ENCODE measurements at regions of chr1 and their contacts with region 1.

Region 1: DNA sequence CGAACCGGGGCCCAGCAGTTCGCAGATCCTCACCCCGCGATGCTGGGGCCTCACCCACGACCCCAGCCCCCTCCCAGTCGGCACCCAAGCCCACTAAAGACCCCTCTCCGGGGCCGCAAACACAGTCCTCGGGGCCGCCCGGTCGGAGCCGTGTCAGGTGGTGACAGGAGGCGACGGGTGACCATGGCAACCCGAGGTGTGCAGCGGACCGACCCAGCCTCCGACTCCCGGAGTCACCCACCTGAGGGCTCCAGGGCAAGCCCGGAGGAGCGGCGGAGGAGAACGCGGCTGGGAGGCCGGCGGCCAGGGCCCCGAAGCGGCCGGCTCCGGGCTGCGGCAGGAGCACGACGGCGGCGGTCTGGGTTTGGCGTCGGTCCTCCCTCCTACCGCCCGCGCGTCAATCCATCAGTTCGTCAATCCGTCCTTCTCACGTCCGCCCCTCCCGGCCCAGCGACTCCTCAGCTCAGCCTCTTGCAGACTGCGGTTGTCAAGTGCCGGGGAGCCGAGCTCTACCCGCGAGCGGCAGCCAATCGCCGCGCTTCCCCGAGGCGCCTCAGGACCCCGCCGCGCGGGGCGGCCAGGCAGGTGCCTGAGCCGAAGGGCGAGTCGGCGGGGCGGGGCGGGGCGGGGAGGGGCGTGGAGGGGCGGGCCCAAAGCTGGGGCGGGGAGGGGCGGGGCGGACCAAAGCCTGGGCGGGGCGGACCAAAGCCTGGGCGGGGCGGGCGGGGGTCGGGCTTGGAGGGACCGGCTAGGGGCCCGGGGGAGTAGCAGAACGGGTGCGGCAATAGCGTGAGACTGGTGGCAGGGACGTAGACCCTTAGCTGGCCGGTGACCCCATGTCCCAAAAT is at the start of gene WDR47:
- DNase-seq: peak; percentile 93 to 99
- H3K4me3 ChIP-seq: peak within 1 kb of the TSS; percentile 100
- CTCF ChIP-seq: no peak
- POLR2A ChIP-seq: peak in 1 of 2 donors; percentile 84
- total RNA-seq, gene WDR47: 44.3 to 75.3 (median 49.0) TPM

Region 2: DNA sequence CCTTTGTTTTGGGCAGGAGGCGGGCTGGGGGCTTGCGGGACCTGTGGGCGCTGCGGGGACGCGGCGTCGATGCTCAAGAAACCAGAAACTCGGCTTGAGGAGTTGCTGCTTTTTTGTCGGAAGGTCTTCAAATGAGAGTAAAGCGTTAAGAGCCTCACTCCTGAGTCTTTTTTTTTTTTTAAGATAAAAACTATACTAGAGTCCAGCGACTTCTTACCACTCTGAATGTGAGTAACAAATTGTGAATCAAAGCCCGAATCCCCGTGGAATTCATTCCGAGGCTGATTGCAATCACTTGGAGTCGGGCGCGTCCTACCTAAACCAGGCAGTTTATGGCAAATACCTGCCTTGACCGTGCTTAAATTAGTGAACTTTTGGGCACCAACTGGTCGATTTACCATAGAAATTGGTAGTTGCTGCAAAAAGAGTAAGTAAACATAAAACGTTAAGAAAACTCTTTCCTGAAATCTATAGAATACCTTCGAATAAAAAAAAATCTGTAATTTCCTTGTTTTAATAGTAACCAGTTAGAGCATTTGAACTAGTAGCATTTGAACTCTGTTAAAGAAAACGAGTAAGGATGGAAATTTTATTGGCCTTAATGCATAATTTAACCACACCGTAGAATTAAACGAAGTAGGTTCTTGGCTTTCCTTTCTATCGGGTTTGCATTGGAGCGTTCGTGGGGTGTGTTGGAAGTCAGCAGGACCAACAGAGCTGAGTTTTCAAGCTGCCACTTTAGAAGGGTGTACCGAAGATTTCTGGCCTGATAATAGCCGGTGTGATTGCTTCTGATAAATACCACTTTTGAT is 164.3 kb before region 1 on chr1:
- intact Hi-C with region 1: no loop called
- DNase-seq: no peak
- H3K4me3 ChIP-seq: peak overlapping the region; percentile 96
- CTCF ChIP-seq: no peak
- POLR2A ChIP-seq: no peak

Region 3: GRCh38 chr1:109099938-109100773 is 58.3 kb after region 1 on chr1:
- intact Hi-C with region 1: loop called (anchors 5 kb)
- DNase-seq: peak; percentile 95 to 99
- H3K4me3 ChIP-seq: peak overlapping the region; percentile 96
- CTCF ChIP-seq: peak in 1 of 3 donors; percentile 12
- POLR2A ChIP-seq: peak in 1 of 2 donors; percentile 94

Region 4: DNA sequence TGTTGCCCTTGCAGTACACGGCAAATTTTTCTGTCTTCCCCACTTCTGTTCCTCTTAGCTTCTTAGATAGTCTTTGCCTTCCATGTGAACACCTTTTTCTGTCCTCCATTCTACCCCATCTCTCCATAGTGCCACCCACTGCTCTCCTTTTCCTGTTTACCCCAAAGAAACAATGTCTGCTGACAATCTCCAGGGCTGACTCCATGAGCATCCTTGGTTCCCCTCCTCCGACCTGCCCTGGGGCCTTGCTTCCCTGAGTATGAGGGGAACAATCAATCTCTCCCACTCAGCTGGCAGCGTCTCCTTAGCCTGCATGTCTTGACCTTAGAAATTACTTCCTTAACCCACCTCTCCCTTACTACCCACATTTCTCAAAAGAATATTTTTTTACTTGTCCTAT is 277.3 kb after region 1 on chr1:
- intact Hi-C with region 1: no loop called
- DNase-seq: no peak
- H3K4me3 ChIP-seq: no peak overlapping the region
- CTCF ChIP-seq: no peak
- POLR2A ChIP-seq: no peak